Psoas muscle (tissue), 8 donors: ENCODE measurements at regions of chr2 and their contacts with region 1.

Region 1: GRCh38 chr2:231104115-231104713 is 20.6 kb downstream of the HTR2B start:
- DNase-seq: peak; percentile 23 to 50
- ATAC-seq: peak; percentile 73 to 82 (median 78)
- H3K4me3 ChIP-seq: no peak overlapping the region
- H3K27ac ChIP-seq: peak overlapping the region; percentile 2
- H3K4me1 ChIP-seq: peaks cover 4% of the 10 kb centered on the region
- H3K27me3 ChIP-seq: no peaks in the 10 kb centered on the region
- CTCF ChIP-seq: peak; percentile 77

Region 2: DNA sequence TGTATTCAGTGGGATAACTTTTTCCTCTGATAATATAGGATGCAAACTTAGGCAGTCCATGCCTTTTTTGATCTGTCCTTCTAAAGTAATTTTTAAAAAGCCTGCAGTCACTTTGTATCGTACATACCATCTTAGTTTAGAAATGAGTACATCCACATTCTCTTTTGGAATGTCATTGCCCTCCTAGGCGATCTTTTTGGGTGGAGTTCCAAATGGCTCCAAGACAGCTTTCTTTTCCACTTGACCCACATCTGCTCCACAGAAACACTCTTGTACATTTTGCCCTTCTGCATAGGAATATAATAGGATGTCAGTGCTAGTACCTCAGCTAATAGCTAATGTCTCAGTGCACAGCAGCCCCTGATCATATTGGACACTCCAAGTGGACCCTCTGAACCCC is 42.5 kb after region 1 on chr2:
- intact Hi-C with region 1: loop called in 1 of 2 experiments (anchors 5 kb)
- DNase-seq: no peak
- ATAC-seq: peak in 2 of 4 donors; percentile 48 to 57
- H3K4me3 ChIP-seq: no peak overlapping the region
- H3K27ac ChIP-seq: no peak overlapping the region
- H3K4me1 ChIP-seq: no peaks in the 10 kb centered on the region
- H3K27me3 ChIP-seq: no peaks in the 10 kb centered on the region
- CTCF ChIP-seq: no peak

Region 3: GRCh38 chr2:231191896-231192872 is 88.0 kb after region 1 on chr2:
- intact Hi-C with region 1: loop called (anchors 2 to 10 kb)
- DNase-seq: peak; percentile 82 to 85
- ATAC-seq: peak in 2 of 4 donors; percentile 32
- H3K4me3 ChIP-seq: no peak overlapping the region
- H3K27ac ChIP-seq: peak overlapping the region; percentile 18
- H3K4me1 ChIP-seq: peaks cover 27% of the 10 kb centered on the region
- H3K27me3 ChIP-seq: no peaks in the 10 kb centered on the region
- CTCF ChIP-seq: peak; percentile 43

Region 4: DNA sequence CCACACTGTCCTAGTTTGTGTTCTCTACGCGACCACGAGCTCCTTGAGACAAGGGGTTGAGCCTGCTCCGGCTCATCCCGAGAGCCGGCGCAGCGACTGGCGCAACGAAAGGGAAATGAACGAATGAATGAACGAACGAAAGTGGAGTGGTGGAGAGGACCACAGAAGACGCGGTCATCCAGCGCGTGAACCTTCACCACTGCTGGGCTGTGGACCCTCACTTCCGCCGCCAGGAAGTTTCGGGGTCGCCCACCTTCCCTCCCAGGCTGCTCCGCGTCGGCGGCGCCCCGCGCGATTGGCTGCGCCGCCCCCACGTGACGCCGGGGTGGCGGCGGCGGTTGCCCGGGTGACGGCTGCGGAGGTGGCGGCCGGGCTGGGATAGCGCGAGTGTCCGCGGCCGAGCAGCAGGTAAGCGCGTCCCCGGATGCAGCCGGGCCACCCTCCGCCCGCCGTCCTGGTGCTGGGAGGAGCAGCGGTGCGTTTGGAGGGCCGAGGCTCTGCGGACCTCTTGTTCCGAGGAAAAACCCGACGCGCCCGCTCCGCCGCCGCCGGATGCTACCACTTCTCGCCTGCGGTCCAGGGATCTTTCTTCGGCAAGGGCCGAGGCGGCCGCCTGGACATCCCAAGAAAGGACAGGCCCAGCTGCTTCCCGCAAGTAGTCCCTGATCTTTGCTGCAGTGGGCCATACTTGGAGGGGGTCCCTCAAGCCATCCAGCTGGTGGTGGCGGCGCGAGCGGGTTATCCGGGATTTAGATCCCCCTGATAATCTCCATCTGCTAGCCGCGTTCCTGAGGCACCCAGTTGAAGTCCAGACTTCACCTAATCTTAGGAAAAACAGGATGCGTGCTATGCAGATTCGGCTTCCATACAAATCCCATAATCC is 94.3 kb after region 1 on chr2 and contains the start of gene ARMC9:
- intact Hi-C with region 1: loop called (anchors 2 to 10 kb)
- DNase-seq: peak; percentile 75 to 83
- ATAC-seq: peak; percentile 95 to 99 (median 98)
- H3K4me3 ChIP-seq: peak within 1 kb of the TSS; percentile 97
- H3K27ac ChIP-seq: peak within 1 kb of the TSS; percentile 30
- H3K4me1 ChIP-seq: peaks cover 6% of the 10 kb centered on the region
- H3K27me3 ChIP-seq: no peaks in the 10 kb centered on the region
- CTCF ChIP-seq: no peak
- total RNA-seq, gene ARMC9: 1.4 to 18.4 (median 2.6) TPM

Region 5: GRCh38 chr2:231411831-231412617 is 307.8 kb after region 1 on chr2:
- intact Hi-C with region 1: loop called (anchors 5 to 10 kb)
- DNase-seq: peak; percentile 85 to 86
- ATAC-seq: peak; percentile 92 to 98 (median 97)
- H3K4me3 ChIP-seq: peak overlapping the region; percentile 66
- H3K27ac ChIP-seq: no peak overlapping the region
- H3K4me1 ChIP-seq: peaks cover 6% of the 10 kb centered on the region
- H3K27me3 ChIP-seq: peaks cover 0 to 12% (median 1%) of the 10 kb centered on the region in 3 donors
- CTCF ChIP-seq: peak; percentile 79

Region 6: DNA sequence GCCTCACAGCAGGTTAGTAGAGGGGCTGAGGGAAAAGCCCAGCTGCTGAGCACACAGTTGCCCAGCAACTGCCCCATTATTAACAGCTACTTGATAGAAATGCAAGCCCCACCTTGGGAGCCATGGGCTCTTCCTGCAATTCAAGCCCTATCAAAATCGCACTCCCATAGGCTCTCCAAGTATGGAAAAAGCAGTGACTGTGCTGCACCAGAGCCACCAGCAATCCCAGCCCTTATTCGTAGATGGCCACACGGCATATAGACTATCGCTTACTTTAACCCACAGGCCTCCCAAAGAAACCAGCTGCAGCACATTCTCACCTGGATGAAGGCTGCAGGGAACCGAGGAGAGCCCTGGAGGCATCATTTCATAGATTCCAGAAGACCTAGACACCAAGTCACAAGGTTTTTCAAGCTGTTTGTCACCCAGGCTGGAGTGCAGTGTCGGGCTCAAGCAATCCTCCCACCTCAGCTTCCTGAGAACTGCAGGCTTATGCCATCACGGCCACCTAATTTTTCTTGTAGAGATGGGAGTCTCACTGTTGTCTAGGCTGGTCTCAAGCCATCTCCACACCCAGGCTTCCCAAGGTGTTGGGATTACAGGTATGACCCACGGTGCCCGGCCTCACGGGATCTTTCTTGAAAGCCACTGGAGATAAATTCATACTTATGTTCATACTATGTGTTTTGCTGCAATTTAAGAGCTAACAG is 348.7 kb after region 1 on chr2:
- intact Hi-C with region 1: loop called in 1 of 2 experiments (anchors 5 kb)
- DNase-seq: no peak
- ATAC-seq: peak; percentile 12 to 28 (median 16)
- H3K4me3 ChIP-seq: no peak overlapping the region
- H3K27ac ChIP-seq: no peak overlapping the region
- H3K4me1 ChIP-seq: no peaks in the 10 kb centered on the region
- H3K27me3 ChIP-seq: no peaks in the 10 kb centered on the region
- CTCF ChIP-seq: no peak